CD4-positive, alpha-beta T cell (primary cell): ENCODE measurements at regions of chr20 and their contacts with region 1.

Region 1: GRCh38 chr20:35994994-35995453 is 26.6 kb downstream of the CNBD2 start:
- DNase-seq: peak; percentile 76 to 89 (median 82)
- ATAC-seq: peak; percentile 85
- H3K4me3 ChIP-seq: no peak overlapping the region
- H3K4me3 Mint-ChIP-seq: no peak overlapping the region
- H3K27ac ChIP-seq: no peak overlapping the region
- H3K27ac Mint-ChIP-seq: no peak overlapping the region
- H3K4me1 ChIP-seq: peaks cover 7% of the 10 kb centered on the region
- H3K4me1 Mint-ChIP-seq: no peaks in the 10 kb centered on the region
- H3K27me3 ChIP-seq: no peaks in the 10 kb centered on the region
- H3K27me3 Mint-ChIP-seq: peaks cover 5% of the 10 kb centered on the region
- CTCF ChIP-seq: peak; percentile 89

Region 2: GRCh38 chr20:35363190-35363589 is 631.8 kb before region 1 on chr20:
- CTCF ChIA-PET with region 1: no interaction called
- POLR2A ChIA-PET with region 1: no interaction called
- intact Hi-C with region 1: no loop called
- DNase-seq: no peak
- ATAC-seq: no peak
- H3K4me3 ChIP-seq: no peak overlapping the region
- H3K4me3 Mint-ChIP-seq: no peak overlapping the region
- H3K27ac ChIP-seq: no peak overlapping the region
- H3K27ac Mint-ChIP-seq: no peak overlapping the region
- H3K4me1 ChIP-seq: no peaks in the 10 kb centered on the region
- H3K4me1 Mint-ChIP-seq: no peaks in the 10 kb centered on the region
- H3K27me3 ChIP-seq: no peaks in the 10 kb centered on the region
- H3K27me3 Mint-ChIP-seq: no peaks in the 10 kb centered on the region
- CTCF ChIP-seq: no peak

Region 3: GRCh38 chr20:35901678-35902544 is 93.1 kb before region 1 on chr20:
- CTCF ChIA-PET with region 1: no interaction called
- POLR2A ChIA-PET with region 1: no interaction called
- intact Hi-C with region 1: no loop called
- DNase-seq: no peak
- ATAC-seq: no peak
- H3K4me3 ChIP-seq: no peak overlapping the region
- H3K4me3 Mint-ChIP-seq: no peak overlapping the region
- H3K27ac ChIP-seq: no peak overlapping the region
- H3K27ac Mint-ChIP-seq: no peak overlapping the region
- H3K4me1 ChIP-seq: no peaks in the 10 kb centered on the region
- H3K4me1 Mint-ChIP-seq: peaks cover 9% of the 10 kb centered on the region
- H3K27me3 ChIP-seq: no peaks in the 10 kb centered on the region
- H3K27me3 Mint-ChIP-seq: no peaks in the 10 kb centered on the region
- CTCF ChIP-seq: no peak

Region 4: DNA sequence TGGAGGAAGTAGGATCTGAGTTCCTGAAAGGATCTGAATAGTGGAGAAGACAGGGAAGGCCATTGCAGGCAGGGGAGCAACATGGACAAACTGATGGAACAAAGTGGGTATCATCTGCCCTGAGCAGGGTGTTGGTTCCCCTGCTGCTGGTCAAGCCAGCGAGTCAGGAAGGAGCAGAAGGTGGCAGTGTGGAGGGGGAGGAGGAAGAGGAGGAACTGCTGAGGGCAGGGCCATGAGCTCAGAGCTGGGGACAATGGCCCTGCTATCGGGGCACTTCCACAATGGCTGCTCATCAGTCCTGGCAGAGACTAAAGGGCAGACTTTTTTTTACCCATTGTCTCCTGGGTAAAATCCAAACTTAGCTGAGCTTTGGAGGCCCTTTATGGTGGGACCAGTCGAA is 13.1 kb before region 1 on chr20:
- CTCF ChIA-PET with region 1: interaction called, 10 read pairs
- POLR2A ChIA-PET with region 1: no interaction called
- intact Hi-C with region 1: no loop called
- DNase-seq: no peak
- ATAC-seq: no peak
- H3K4me3 ChIP-seq: no peak overlapping the region
- H3K4me3 Mint-ChIP-seq: no peak overlapping the region
- H3K27ac ChIP-seq: no peak overlapping the region
- H3K27ac Mint-ChIP-seq: no peak overlapping the region
- H3K4me1 ChIP-seq: no peaks in the 10 kb centered on the region
- H3K4me1 Mint-ChIP-seq: no peaks in the 10 kb centered on the region
- H3K27me3 ChIP-seq: no peaks in the 10 kb centered on the region
- H3K27me3 Mint-ChIP-seq: peaks cover 4% of the 10 kb centered on the region
- CTCF ChIP-seq: no peak

Region 5: GRCh38 chr20:36035745-36036144 is 40.7 kb after region 1 on chr20:
- CTCF ChIA-PET with region 1: no interaction called
- POLR2A ChIA-PET with region 1: no interaction called
- intact Hi-C with region 1: no loop called
- DNase-seq: no peak
- ATAC-seq: no peak
- H3K4me3 ChIP-seq: no peak overlapping the region
- H3K4me3 Mint-ChIP-seq: no peak overlapping the region
- H3K27ac ChIP-seq: no peak overlapping the region
- H3K27ac Mint-ChIP-seq: no peak overlapping the region
- H3K4me1 ChIP-seq: no peaks in the 10 kb centered on the region
- H3K4me1 Mint-ChIP-seq: no peaks in the 10 kb centered on the region
- H3K27me3 ChIP-seq: no peaks in the 10 kb centered on the region
- H3K27me3 Mint-ChIP-seq: peaks cover 8% of the 10 kb centered on the region
- CTCF ChIP-seq: no peak

Region 6: GRCh38 chr20:36132802-36133211 is 137.8 kb after region 1 on chr20:
- CTCF ChIA-PET with region 1: interaction called, 81 read pairs
- POLR2A ChIA-PET with region 1: no interaction called
- intact Hi-C with region 1: loop called (anchors 1 kb)
- DNase-seq: no peak
- ATAC-seq: no peak
- H3K4me3 ChIP-seq: no peak overlapping the region
- H3K4me3 Mint-ChIP-seq: no peak overlapping the region
- H3K27ac ChIP-seq: no peak overlapping the region
- H3K27ac Mint-ChIP-seq: no peak overlapping the region
- H3K4me1 ChIP-seq: no peaks in the 10 kb centered on the region
- H3K4me1 Mint-ChIP-seq: no peaks in the 10 kb centered on the region
- H3K27me3 ChIP-seq: no peaks in the 10 kb centered on the region
- H3K27me3 Mint-ChIP-seq: no peaks in the 10 kb centered on the region
- CTCF ChIP-seq: no peak

Region 7: GRCh38 chr20:36141310-36141709 is 146.3 kb after region 1 on chr20:
- CTCF ChIA-PET with region 1: interaction called, 81 read pairs
- POLR2A ChIA-PET with region 1: interaction called, 11 read pairs
- intact Hi-C with region 1: loop called (anchors 1 kb)
- DNase-seq: no peak
- ATAC-seq: no peak
- H3K4me3 ChIP-seq: no peak overlapping the region
- H3K4me3 Mint-ChIP-seq: no peak overlapping the region
- H3K27ac ChIP-seq: no peak overlapping the region
- H3K27ac Mint-ChIP-seq: no peak overlapping the region
- H3K4me1 ChIP-seq: no peaks in the 10 kb centered on the region
- H3K4me1 Mint-ChIP-seq: no peaks in the 10 kb centered on the region
- H3K27me3 ChIP-seq: no peaks in the 10 kb centered on the region
- H3K27me3 Mint-ChIP-seq: peaks cover 34% of the 10 kb centered on the region
- CTCF ChIP-seq: no peak

Region 8: DNA sequence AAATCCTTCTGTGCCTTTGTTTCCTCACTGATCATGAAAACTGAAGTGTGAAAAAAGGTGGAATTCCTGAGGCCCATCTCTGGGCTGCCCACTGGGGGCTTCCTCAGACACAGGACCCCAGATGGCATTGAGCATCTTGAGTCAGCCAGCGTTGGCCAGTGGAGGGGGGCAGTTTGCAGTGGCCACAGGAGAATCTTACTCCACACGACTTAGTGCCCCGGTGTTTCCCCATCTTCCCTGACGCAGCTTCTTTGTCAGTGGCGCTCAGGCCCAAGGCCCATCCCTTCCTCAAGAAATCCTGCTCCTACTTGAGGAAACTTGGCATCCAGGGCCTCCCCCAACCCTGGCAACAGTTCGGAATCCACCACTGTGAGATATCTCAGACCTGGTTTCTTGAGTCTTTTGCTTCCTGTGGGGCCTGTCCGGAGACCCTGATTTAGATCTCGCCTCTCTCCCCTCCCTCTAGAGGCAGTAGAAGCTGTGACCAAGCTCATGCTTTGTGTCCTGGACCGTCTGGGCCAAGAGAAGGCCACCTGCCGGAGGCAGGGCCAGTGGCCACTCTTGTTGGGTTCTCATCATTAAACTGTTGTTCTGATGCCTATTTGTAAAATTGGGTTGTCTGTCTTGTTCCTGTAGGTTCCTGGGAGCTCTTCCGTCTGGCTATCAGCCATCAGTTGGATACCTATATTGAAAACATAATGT is 290.9 kb after region 1 on chr20:
- CTCF ChIA-PET with region 1: no interaction called
- POLR2A ChIA-PET with region 1: no interaction called
- intact Hi-C with region 1: no loop called
- DNase-seq: no peak
- ATAC-seq: no peak
- H3K4me3 ChIP-seq: no peak overlapping the region
- H3K4me3 Mint-ChIP-seq: no peak overlapping the region
- H3K27ac ChIP-seq: no peak overlapping the region
- H3K27ac Mint-ChIP-seq: no peak overlapping the region
- H3K4me1 ChIP-seq: no peaks in the 10 kb centered on the region
- H3K4me1 Mint-ChIP-seq: no peaks in the 10 kb centered on the region
- H3K27me3 ChIP-seq: peaks cover 8 to 9% of the 10 kb centered on the region in 2 experiments
- H3K27me3 Mint-ChIP-seq: peaks cover 48% of the 10 kb centered on the region
- CTCF ChIP-seq: no peak

Region 9: DNA sequence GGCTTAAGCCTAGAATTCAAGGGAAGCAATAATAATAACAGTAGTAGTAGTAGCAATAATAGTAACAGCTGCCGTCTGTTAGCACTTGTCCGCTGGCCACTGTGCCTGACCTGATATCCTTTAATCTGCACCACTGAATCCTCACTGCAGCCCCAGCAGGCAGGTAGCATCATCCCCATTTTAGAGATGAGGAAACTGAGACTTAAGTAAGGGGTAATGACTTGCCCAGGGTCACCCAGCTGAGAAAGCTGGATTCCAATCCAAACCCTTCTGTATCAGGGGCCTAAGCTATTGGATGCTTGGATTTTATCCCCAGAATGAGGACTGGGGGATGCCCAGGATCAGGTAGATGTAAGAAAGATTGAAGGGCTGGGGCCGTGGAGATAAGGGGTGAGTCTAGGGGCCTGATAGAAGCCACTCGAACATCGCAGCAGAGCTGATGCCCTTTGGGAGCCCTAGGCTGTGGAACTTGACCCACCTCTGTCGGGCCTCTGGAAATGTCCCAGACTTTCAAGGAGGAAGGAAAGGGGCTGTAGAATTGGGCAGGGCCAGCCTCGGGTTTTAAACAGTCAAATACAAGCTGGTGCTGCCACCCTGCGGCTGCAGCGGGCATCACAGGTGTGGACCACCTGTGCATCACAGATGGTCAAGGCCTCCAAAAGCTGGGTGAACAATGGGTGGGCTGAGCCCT is 444.2 kb after region 1 on chr20:
- CTCF ChIA-PET with region 1: interaction called, 4 read pairs
- POLR2A ChIA-PET with region 1: no interaction called
- intact Hi-C with region 1: loop called in 1 of 2 experiments (anchors 2 kb)
- DNase-seq: peak; percentile 44 to 76 (median 55)
- ATAC-seq: peak; percentile 28
- H3K4me3 ChIP-seq: no peak overlapping the region
- H3K4me3 Mint-ChIP-seq: no peak overlapping the region
- H3K27ac ChIP-seq: no peak overlapping the region
- H3K27ac Mint-ChIP-seq: no peak overlapping the region
- H3K4me1 ChIP-seq: peaks cover 21% of the 10 kb centered on the region
- H3K4me1 Mint-ChIP-seq: peaks cover 4% of the 10 kb centered on the region
- H3K27me3 ChIP-seq: no peaks in the 10 kb centered on the region
- H3K27me3 Mint-ChIP-seq: peaks cover 13% of the 10 kb centered on the region
- CTCF ChIP-seq: peak; percentile 83